PC-9 (cell line): ENCODE measurements at regions of chr10 and their contacts with region 1.

Region 1: DNA sequence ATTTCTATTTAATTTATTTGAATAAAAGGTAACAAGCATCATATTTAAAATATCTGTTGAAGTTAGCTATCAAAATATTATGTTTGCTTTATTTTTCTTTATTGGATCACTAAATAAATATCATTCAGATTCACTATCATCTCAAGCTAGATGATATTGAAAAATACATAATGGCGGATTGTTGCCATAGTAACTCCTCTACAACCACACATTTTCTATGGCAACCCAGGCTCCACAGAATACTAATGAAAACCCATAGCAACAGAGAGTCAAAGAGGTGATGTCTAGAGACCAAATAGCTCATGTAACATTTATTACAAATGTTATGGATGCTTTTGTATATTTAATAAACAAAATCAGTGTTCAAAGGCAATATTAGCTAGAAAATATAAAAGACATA is 148.9 kb upstream of the CDK1 start:
- DNase-seq: no peak
- H3K4me3 ChIP-seq: no peak overlapping the region
- H3K27ac ChIP-seq: no peak overlapping the region
- H3K4me1 ChIP-seq: no peaks in the 10 kb centered on the region
- H3K27me3 ChIP-seq: no peaks in the 10 kb centered on the region
- CTCF ChIP-seq: no peak

Region 2: DNA sequence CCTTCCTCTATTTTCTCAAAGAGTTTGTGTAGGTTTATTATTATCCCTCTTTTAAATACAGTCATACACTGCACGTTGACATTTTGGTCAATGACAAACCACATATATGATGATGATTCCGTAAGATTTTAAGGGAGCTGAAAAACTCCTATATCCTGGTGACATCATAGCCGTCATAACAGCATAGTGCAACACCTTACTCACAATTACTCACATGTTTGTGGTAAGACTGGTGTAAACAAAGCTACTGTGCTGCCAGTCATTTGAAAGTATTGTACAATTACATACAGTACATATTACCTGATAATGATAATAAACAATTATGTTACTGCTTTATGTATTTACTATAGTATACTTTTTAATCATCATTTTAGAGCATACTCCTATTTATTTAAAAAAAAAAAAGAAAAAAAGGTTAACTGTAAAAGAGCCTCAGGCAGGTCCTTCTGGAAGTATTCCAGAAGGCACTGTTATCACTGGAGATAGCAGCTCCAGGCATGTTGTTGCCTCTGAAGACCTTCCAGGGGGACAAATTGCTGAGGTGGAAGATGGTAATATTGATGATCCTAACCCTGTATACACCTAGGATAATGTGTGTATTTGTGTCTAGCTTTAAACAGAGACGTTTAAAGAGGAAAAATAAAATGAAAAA is 25.6 kb after region 1 on chr10:
- CTCF ChIA-PET with region 1: no interaction called
- POLR2A ChIA-PET with region 1: interaction called, 11 read pairs
- intact Hi-C with region 1: no loop called
- DNase-seq: peak in 1 of 2 experiments; percentile 82
- H3K4me3 ChIP-seq: no peak overlapping the region
- H3K27ac ChIP-seq: peak overlapping the region; percentile 18; the same call in 1 of the 2 replicates
- H3K4me1 ChIP-seq: peaks cover 21% of the 10 kb centered on the region
- H3K27me3 ChIP-seq: no peaks in the 10 kb centered on the region
- CTCF ChIP-seq: no peak